AG04450 (cell line): ENCODE measurements at regions of chr1 and their contacts with region 1.

Region 1: DNA sequence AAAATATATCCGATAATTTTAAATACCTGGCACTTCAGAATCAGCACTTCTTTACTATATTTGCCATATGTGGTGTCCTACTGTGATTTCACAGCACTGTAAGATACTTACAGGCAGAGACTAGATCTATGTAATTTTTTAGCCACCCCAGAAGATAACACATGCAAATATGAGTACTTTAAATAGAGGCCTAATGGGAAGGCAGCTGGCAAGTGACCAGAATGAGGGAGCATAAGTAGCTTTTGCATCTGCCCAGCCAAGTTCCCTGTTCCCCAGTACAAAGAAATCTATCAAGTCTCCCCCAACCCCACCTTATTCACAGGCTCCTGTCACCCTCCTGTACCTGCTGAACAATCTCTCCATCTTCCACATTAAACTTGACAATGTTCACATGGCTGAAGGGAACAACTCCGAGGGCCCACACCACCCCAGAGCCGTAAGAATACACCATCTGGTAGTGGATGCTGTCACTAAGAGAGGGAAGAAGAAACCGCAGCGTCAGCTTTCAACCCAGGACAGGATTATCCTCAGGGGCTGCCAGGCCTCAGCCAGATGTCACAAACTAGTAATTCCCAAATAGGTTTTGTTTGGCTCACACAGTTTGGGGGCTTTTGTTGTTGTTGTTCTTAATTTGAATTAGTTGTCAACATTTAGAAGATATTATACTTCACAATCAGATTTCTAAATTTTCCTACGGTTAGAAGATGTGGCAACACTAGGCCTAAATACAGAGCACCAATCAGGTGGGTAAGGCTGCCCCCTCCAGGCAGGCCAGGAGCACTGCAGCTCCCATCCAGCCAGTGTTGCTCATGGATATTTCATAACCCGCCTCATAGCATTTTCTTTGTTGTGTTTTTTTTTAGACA is 10.4 kb downstream of the EMC1 start:
- DNase-seq: peak; percentile 38
- H3K4me3 ChIP-seq: no peak overlapping the region
- H3K27ac ChIP-seq: no peak overlapping the region
- H3K27me3 ChIP-seq: no peaks in the 10 kb centered on the region
- CTCF ChIP-seq: peak; percentile 96

Region 2: DNA sequence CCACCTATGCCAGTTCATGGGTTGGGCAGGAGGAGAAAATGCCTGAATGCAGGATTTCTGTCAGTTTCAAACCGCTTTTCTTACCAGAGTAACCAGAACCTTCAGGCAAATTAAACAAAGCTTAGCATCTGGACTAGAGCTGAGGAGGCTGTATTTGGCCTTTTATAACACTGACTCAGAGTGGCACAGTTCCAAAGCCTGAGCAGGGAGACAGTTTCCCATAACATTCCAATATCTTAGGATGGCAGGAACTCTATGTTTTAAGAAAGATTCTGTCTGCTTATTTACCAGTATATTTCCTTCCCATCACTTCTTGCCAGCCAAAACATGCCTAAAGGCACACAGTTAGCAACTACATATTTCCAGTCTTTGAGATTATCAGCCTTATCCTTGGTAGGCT is 77.6 kb before region 1 on chr1:
- CTCF ChIA-PET with region 1: interaction called, 13 read pairs
- POLR2A ChIA-PET with region 1: no interaction called
- DNase-seq: peak; percentile 86
- H3K4me3 ChIP-seq: no peak overlapping the region
- H3K27ac ChIP-seq: peak overlapping the region; percentile 11
- H3K27me3 ChIP-seq: no peaks in the 10 kb centered on the region
- CTCF ChIP-seq: no peak

Region 3: DNA sequence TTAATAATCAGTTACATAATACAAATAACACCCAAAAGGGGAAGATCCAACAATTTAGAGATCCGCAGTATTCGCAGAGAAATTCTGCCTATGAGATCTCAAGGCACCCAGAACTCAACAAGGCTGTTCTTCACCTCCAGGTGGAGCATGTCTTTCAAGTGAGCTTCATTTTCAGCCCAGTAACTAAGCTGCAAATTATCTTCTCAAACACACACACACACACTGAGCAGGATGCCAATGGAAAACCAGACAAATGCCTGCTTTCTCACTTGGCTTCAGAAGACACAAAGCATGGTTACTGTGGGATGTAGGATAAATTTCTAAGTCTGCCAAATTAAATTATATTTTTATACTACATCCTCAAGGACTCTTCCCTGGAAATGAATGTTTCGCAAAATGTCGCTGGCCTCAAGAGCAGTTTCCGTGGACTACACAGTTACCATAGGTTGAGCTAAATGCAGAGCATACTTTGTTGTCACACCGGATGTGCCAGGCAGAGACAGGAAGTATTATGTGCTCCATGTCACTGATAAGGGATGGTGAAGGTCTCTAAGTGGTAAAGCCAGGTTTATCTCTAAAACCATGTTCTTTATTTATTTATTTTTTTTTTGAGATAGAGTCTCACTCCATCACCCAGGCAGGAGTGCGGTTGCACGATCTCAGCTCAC is 61.2 kb before region 1 on chr1:
- CTCF ChIA-PET with region 1: interaction called, 32 read pairs
- POLR2A ChIA-PET with region 1: interaction called, 4 read pairs
- DNase-seq: no peak
- H3K4me3 ChIP-seq: no peak overlapping the region
- H3K27ac ChIP-seq: no peak overlapping the region
- H3K27me3 ChIP-seq: no peaks in the 10 kb centered on the region
- CTCF ChIP-seq: peak; percentile 40

Region 4: GRCh38 chr1:19220991-19221390 is 19.9 kb before region 1 on chr1:
- CTCF ChIA-PET with region 1: interaction called, 11 read pairs
- POLR2A ChIA-PET with region 1: no interaction called
- DNase-seq: no peak
- H3K4me3 ChIP-seq: no peak overlapping the region
- H3K27ac ChIP-seq: no peak overlapping the region
- H3K27me3 ChIP-seq: no peaks in the 10 kb centered on the region
- CTCF ChIP-seq: no peak

Region 5: GRCh38 chr1:19251305-19252196 is 10.6 kb after region 1 on chr1 and contains the starts of genes EMC1 and MRTO4:
- CTCF ChIA-PET with region 1: interaction called, 20 read pairs
- POLR2A ChIA-PET with region 1: interaction called, 4 read pairs
- DNase-seq: peak; percentile 23
- H3K4me3 ChIP-seq: peak within 1 kb of the TSS; percentile 98
- H3K27ac ChIP-seq: peak within 1 kb of the TSS; percentile 97
- H3K27me3 ChIP-seq: no peaks in the 10 kb centered on the region
- CTCF ChIP-seq: no peak
- polyA plus RNA-seq, gene EMC1: 49.0 and 68.7 TPM in 2 replicates
- polyA plus RNA-seq, gene MRTO4: 29.0 and 30.8 TPM in 2 replicates